ENCODE measurements at regions of chr6 and their contacts with region 1.

Region 1: GRCh38 chr6:139109558-139109957 is 25.3 kb upstream of the HECA start:
- DNase-seq: peak in 6 of 14 experiments; percentile 14 to 62 (median 43)
- ATAC-seq: no peak
- H3K4me3 ChIP-seq: no peak overlapping the region
- H3K4me3 Mint-ChIP-seq: no peak overlapping the region
- H3K27ac ChIP-seq: no peak overlapping the region
- H3K27ac Mint-ChIP-seq: peak overlapping the region; percentile 83
- H3K4me1 ChIP-seq: peaks cover 36% of the 10 kb centered on the region
- H3K4me1 Mint-ChIP-seq: peaks cover 59% of the 10 kb centered on the region
- H3K27me3 ChIP-seq: no peaks in the 10 kb centered on the region
- H3K27me3 Mint-ChIP-seq: no peaks in the 10 kb centered on the region
- CTCF ChIP-seq: peak; percentile 26

Region 2: DNA sequence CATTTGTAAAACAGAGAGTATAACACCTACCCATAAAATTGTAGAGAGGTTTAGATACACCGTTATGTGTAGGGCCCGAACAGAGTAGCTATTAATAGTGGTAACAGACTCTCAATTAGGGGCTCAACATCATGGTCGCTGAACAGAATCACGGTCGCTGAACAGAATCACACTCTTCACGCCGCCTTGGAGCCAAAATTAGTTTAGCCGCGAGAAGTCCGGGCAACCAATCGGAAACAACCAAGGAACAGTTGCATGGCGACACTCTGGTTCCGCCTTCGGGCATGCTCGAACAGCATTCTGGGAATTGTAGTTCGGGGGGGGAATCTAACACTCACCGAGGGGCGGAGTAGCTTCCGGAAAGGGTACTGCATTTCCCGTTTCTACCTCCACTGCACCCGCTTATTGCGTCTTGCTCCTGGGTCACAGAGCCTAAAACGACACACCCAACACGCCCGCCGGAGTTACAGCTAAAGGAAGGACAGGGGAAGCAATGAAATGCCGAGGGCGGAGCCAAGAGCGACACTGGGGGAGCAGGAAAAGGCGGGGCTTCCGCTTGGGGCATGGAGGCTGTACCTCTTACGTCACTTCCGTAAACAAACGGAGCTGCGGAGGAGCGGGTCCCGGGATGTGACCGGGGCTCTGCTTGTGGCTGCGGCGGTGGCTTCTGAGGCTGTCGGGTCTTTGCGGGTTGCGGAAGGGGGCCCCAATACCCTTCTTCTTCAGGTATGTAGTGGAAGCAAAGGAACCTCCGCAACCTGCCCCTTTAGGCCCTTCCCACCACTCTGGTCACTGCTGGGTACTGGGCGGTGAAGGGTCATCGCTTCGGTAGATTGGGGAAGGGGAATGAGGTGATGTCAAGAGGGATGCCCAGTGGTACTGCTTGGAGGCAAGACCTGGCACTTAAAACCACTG is 336.1 kb before region 1 on chr6 and contains the start of gene CCDC28A:
- CTCF ChIA-PET with region 1: no interaction called
- POLR2A ChIA-PET with region 1: interaction called, 3 read pairs
- intact Hi-C with region 1: loop called in 1 of 2 experiments (anchors 5 kb)
- DNase-seq: peak; percentile 87 to 97 (median 92)
- ATAC-seq: peak; percentile 84
- H3K4me3 ChIP-seq: peak within 1 kb of the TSS; percentile 85
- H3K4me3 Mint-ChIP-seq: peak within 1 kb of the TSS; percentile 98
- H3K27ac ChIP-seq: peak within 1 kb of the TSS; percentile 93 to 97
- H3K27ac Mint-ChIP-seq: peak within 1 kb of the TSS; percentile 98
- H3K4me1 ChIP-seq: peaks cover 11% of the 10 kb centered on the region
- H3K4me1 Mint-ChIP-seq: peaks cover 39% of the 10 kb centered on the region
- H3K27me3 ChIP-seq: no peaks in the 10 kb centered on the region
- H3K27me3 Mint-ChIP-seq: no peaks in the 10 kb centered on the region
- CTCF ChIP-seq: no peak
- total RNA-seq, gene CCDC28A: 36.9 to 37.2 TPM

Region 3: GRCh38 chr6:139037490-139037889 is 72.1 kb before region 1 on chr6:
- CTCF ChIA-PET with region 1: no interaction called
- POLR2A ChIA-PET with region 1: interaction called, 48 read pairs
- intact Hi-C with region 1: loop called in 1 of 2 experiments (anchors 5 kb)
- DNase-seq: no peak
- ATAC-seq: no peak
- H3K4me3 ChIP-seq: no peak overlapping the region
- H3K4me3 Mint-ChIP-seq: no peak overlapping the region
- H3K27ac ChIP-seq: no peak overlapping the region
- H3K27ac Mint-ChIP-seq: no peak overlapping the region
- H3K4me1 ChIP-seq: peaks cover 8% of the 10 kb centered on the region
- H3K4me1 Mint-ChIP-seq: peaks cover 50% of the 10 kb centered on the region
- H3K27me3 ChIP-seq: no peaks in the 10 kb centered on the region
- H3K27me3 Mint-ChIP-seq: no peaks in the 10 kb centered on the region
- CTCF ChIP-seq: no peak

Region 4: DNA sequence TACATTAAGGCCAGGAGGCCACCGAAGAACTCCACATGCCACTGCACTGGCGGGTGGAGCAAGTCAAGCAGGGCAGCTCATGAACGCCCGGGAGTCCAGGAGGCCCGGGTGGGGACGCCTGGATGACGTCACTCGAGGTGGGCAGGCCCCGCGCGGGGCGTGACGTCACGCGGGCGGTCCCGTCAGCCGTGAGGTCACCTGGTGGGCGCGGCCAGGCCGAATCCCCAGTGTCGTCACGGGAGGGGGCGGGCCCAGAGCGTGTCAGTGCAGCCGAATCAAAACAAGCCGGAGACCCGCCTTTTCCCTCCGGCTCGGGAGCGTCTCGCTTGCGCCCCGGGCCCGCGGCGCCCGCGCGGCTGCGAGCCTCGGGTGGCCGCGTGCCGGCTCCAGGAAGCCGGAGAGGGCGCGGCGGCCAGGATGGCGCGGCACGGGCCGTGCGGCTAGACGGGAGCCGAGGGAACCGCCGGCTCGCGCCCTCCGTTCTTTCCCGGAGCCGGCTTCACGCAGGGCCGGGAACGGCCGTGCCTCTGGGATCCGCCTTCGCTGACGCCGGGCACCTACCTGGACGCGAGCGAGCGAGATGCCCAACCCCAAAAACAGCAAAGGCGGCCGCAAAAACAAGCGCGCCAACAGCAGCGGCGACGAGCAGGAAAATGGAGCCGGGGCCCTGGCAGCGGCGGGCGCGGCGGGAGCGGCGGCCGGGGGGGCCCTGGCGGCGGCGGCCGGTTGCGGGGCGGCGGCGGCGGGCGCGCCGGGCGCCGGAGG is 25.4 kb after region 1 on chr6 and contains the start of gene HECA:
- CTCF ChIA-PET with region 1: interaction called, 3 read pairs
- POLR2A ChIA-PET with region 1: interaction called, 55 read pairs
- intact Hi-C with region 1: loop called in 1 of 2 experiments (anchors 1 kb)
- DNase-seq: peak; percentile 97 to 100 (median 99)
- ATAC-seq: peak; percentile 78
- H3K4me3 ChIP-seq: peak within 1 kb of the TSS; percentile 72
- H3K4me3 Mint-ChIP-seq: peak within 1 kb of the TSS; percentile 90
- H3K27ac ChIP-seq: peak within 1 kb of the TSS; percentile 94 to 95
- H3K27ac Mint-ChIP-seq: peak within 1 kb of the TSS; percentile 97
- H3K4me1 ChIP-seq: peaks cover 46% of the 10 kb centered on the region
- H3K4me1 Mint-ChIP-seq: peaks cover 77% of the 10 kb centered on the region
- H3K27me3 ChIP-seq: no peaks in the 10 kb centered on the region
- H3K27me3 Mint-ChIP-seq: no peaks in the 10 kb centered on the region
- CTCF ChIP-seq: no peak
- total RNA-seq, gene HECA: 203 to 207 TPM

Region 5: GRCh38 chr6:139161817-139162284 is 52.3 kb after region 1 on chr6:
- CTCF ChIA-PET with region 1: no interaction called
- POLR2A ChIA-PET with region 1: interaction called, 32 read pairs
- intact Hi-C with region 1: loop called in 1 of 2 experiments (anchors 1 kb)
- DNase-seq: peak in 13 of 14 experiments; percentile 46 to 84 (median 66)
- ATAC-seq: peak; percentile 55
- H3K4me3 ChIP-seq: peak overlapping the region; percentile 11
- H3K4me3 Mint-ChIP-seq: peak overlapping the region; percentile 76
- H3K27ac ChIP-seq: peak overlapping the region; percentile 32 to 70
- H3K27ac Mint-ChIP-seq: peak overlapping the region; percentile 84
- H3K4me1 ChIP-seq: peaks cover 94% of the 10 kb centered on the region
- H3K4me1 Mint-ChIP-seq: peaks cover 88% of the 10 kb centered on the region
- H3K27me3 ChIP-seq: no peaks in the 10 kb centered on the region
- H3K27me3 Mint-ChIP-seq: no peaks in the 10 kb centered on the region
- CTCF ChIP-seq: no peak

Region 6: GRCh38 chr6:139577763-139578604 is 468.4 kb after region 1 on chr6:
- CTCF ChIA-PET with region 1: no interaction called
- POLR2A ChIA-PET with region 1: no interaction called
- intact Hi-C with region 1: no loop called
- DNase-seq: no peak
- ATAC-seq: no peak
- H3K4me3 ChIP-seq: no peak overlapping the region
- H3K4me3 Mint-ChIP-seq: no peak overlapping the region
- H3K27ac ChIP-seq: no peak overlapping the region
- H3K27ac Mint-ChIP-seq: no peak overlapping the region
- H3K4me1 ChIP-seq: peaks cover 10% of the 10 kb centered on the region
- H3K4me1 Mint-ChIP-seq: peaks cover 20% of the 10 kb centered on the region
- H3K27me3 ChIP-seq: no peaks in the 10 kb centered on the region
- H3K27me3 Mint-ChIP-seq: peaks cover 9% of the 10 kb centered on the region
- CTCF ChIP-seq: no peak

Region 7: DNA sequence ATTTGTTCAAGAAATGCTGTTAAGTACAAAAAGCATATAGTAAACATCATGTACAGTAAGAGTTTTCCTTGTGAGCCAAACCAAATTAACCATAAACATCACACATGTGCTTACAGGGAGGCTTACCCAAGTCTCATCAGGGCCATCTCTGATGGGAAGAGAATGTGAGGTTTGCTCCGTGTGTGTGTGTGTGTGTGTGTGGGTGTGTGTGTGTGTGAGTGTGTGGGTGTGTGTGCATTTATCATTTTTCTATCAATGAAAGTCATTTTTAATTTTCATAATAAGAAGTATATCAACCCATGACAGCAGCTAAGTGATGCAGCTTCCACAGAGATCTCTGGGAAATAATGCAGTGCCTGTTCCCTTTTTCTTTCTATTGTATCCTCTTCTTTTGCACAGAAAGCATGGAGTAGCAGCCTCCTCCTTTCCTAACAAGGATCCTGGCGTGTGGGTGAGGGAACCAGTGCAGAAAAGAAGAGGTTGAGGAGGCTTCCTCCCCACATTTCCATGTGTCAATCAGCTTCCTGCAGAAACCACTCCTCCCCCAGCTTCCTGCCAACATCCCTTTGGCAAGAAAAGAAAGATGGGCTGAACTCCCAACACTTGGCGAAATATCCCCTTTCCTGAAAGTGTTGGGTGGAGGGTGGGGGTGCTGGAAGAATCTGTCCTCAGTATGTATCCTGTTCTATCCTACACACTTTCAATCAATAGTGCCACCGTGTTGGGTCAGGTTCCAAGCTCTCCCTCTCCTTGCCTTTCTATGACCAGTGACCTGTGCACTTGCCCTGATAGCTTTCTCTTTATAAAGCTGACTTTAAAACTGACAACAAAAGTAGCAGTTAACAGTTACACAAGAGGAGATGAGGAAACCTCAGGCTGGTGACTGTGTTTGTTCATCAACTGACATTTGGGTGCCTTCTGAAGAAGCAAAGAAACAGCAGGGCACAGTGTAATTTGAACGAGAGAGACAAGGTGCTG is 516.7 kb after region 1 on chr6:
- CTCF ChIA-PET with region 1: no interaction called
- POLR2A ChIA-PET with region 1: no interaction called
- intact Hi-C with region 1: no loop called
- DNase-seq: peak in 2 of 14 experiments; percentile 11 to 20
- ATAC-seq: no peak
- H3K4me3 ChIP-seq: no peak overlapping the region
- H3K4me3 Mint-ChIP-seq: no peak overlapping the region
- H3K27ac ChIP-seq: no peak overlapping the region
- H3K27ac Mint-ChIP-seq: no peak overlapping the region
- H3K4me1 ChIP-seq: no peaks in the 10 kb centered on the region
- H3K4me1 Mint-ChIP-seq: peaks cover 4% of the 10 kb centered on the region
- H3K27me3 ChIP-seq: no peaks in the 10 kb centered on the region
- H3K27me3 Mint-ChIP-seq: peaks cover 29% of the 10 kb centered on the region
- CTCF ChIP-seq: no peak

Measured in CD4-positive, alpha-beta T cell (primary cell).